Mammary epithelial cell (primary cell): ENCODE measurements at regions of chr17 and their contacts with region 1.

Region 1: GRCh38 chr17:34542700-34543336 is 36.6 kb upstream of the TMEM132E start:
- DNase-seq: no peak
- H3K4me3 ChIP-seq: no peak overlapping the region
- H3K27ac ChIP-seq: no peak overlapping the region
- H3K4me1 ChIP-seq: no peaks in the 10 kb centered on the region
- H3K27me3 ChIP-seq: no peaks in the 10 kb centered on the region
- CTCF ChIP-seq: peak; percentile 87 to 91

Region 2: GRCh38 chr17:34499576-34499975 is 43.2 kb before region 1 on chr17:
- CTCF ChIA-PET with region 1: no interaction called
- dilution Hi-C with region 1: no loop called
- in situ Hi-C with region 1: no loop called
- intact Hi-C with region 1: no loop called
- DNase-seq: peak; percentile 11
- H3K4me3 ChIP-seq: no peak overlapping the region
- H3K27ac ChIP-seq: no peak overlapping the region
- H3K4me1 ChIP-seq: no peaks in the 10 kb centered on the region
- H3K27me3 ChIP-seq: no peaks in the 10 kb centered on the region
- CTCF ChIP-seq: no peak

Region 3: DNA sequence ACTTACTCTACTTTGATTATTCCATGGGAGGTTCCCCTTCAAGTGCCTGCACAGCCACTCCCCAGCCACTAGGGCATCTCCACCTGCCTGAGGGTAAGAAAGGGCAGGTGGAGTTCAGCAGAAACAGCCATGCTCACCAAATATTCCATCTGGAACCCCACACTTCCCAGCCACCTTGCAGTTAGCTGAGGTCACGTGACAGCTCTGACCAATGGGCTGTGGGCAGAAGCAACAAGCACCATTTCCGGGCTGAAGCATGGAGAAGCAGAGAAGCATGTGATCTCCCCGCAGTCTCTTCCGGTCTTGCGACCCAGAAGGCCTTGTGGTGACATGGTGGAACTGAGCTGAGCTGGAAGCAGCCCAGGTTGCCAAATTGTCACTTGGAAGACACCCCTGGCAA is 309.8 kb after region 1 on chr17:
- CTCF ChIA-PET with region 1: no interaction called
- dilution Hi-C with region 1: loop called (anchors 25 kb)
- in situ Hi-C with region 1: no loop called
- intact Hi-C with region 1: no loop called
- DNase-seq: no peak
- H3K4me3 ChIP-seq: no peak overlapping the region
- H3K27ac ChIP-seq: no peak overlapping the region
- H3K4me1 ChIP-seq: no peaks in the 10 kb centered on the region
- H3K27me3 ChIP-seq: no peaks in the 10 kb centered on the region
- CTCF ChIP-seq: peak in 1 of 2 donors; percentile 10